Head of caudate nucleus (tissue), 42 donors: ENCODE measurements at regions of chr7 and their contacts with region 1.

Region 1: GRCh38 chr7:141014524-141015395 is at the start of gene MRPS33:
- DNase-seq: peak; percentile 94 to 99 (median 98)

Region 2: GRCh38 chr7:140541513-140542227 is 473.1 kb before region 1 on chr7:
- intact Hi-C with region 1: no loop called
- DNase-seq: peak in 1 of 42 donors; percentile 15

Region 3: GRCh38 chr7:140810830-140811556 is 203.8 kb before region 1 on chr7:
- intact Hi-C with region 1: loop called (anchors 5 kb)
- DNase-seq: peak in 36 of 42 donors; percentile 6 to 88 (median 59)

Region 4: DNA sequence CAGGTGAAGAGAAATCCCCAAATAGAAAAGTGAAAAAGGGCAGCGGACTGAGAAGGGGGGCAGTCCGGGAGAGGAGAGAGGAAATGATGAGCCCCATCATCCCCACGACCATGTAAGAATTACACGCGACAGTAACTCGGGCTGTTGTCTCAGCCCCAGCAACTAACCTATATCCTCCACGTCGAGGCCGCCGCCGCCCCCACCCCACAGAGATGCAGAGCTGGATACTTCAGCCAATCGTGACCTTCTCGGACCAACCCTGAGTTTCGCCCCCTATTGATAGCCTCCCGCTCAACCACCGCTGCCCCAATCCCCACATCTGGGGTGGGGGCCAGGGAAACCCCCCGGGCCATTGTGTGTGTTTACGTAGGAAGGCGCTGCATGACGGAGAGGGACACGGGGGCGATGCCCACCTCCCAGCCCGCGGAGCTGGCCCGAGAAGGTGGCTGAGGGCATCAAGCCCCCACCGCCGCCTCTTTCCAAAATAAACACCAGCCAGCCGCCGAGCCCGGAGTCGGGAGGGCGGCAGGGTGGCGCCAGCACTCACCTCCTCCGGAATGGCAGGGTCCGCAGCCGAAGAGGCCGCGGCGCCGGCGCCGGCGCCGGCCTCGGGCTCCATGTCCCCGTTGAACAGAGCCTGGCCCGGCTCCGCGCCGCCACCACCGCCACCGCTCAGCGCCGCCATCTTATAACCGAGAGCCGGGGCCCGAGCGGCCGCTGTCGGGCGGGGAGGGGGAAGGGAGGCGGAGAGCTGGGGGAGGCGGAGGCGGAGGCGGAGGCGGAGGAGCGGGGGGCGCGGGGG is 90.5 kb before region 1 on chr7:
- intact Hi-C with region 1: loop called (anchors 10 kb)
- DNase-seq: peak; percentile 53 to 89 (median 79)